ENCODE measurements at regions of chr3 and their contacts with region 1.

Region 1: GRCh38 chr3:15268033-15268631 is 62.1 kb downstream of the CAPN7 start:
- DNase-seq: peak; percentile 84
- CTCF ChIP-seq: peak; percentile 97

Region 2: DNA sequence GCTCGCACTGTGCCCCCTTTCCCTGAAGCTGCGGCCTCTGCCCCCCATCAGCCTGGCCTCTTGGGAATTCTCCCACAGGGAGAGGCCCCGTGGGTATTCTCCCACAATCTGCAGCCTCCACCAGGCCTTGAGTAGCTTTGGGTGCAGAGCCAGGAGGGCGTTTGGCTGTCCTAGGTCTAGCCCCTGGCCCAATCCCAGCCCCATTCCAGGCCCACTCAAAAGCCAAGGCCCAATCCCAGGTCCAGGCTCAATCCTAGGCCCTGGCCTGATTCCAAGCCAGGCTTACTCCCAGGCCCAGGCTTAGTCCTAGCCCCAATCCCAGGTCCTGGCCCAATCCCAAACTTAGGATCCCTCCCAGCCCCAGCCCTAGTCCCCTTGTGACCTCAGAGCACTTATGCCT is 1203.2 kb before region 1 on chr3:
- CTCF ChIA-PET with region 1: no interaction called
- POLR2A ChIA-PET with region 1: no interaction called
- DNase-seq: no peak
- CTCF ChIP-seq: no peak

Region 3: DNA sequence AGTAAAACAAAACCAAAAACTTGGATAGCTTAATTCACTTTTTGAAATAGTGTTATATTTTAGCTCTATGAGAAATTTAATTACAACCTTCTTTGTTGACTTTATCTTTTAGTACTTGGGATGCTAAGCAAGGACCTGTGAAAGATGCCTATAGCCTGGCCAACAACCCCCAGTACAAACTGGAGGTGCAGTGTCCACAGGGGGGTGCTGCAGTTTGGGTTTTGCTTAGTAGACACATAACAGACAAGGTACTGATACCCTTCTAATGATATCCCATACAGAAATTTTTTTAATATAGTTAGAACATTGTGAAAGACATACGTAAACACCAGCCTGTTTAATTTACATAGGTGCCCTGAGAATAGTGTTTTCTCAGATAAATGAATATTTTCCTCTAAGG is 26.8 kb before region 1 on chr3:
- CTCF ChIA-PET with region 1: interaction called, 22 read pairs
- POLR2A ChIA-PET with region 1: no interaction called
- DNase-seq: peak; percentile 33
- CTCF ChIP-seq: peak; percentile 37

Region 4: DNA sequence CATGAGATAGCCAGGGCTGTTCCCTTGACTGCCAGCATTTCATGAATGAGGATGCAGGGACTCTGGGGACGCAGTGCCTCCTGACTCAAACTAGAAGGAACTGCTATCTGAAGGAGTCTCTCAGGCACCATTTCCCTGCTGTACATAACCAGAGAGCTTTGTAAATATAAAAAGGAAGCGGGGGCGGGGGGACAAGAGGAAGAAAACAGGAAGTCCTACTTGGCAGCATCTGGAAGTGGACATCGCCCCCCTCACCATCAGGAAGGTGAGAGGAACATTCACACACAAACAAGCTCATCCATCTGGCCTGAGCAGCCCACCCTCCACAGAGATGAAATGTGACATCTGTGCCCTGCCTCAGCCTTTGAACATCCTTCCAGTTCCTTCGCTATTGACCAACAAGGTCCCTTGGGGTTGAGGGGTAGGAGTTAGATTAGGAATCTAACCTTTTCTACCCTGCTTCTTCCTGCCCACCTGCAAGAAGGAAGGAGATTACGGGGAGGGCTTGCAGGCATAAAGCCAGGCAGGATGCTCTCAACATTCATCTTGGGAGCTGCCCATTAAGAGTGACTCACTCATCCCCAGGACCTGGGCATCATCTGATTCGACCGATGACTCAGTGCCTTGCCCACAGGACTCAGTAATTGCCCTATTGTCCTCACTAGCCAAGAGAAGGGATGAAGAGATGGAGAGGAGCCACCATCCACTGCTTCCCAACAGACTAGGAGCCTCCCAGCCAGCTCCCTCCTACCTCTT is 32.4 kb after region 1 on chr3:
- CTCF ChIA-PET with region 1: interaction called, 16 read pairs
- POLR2A ChIA-PET with region 1: no interaction called
- DNase-seq: no peak
- CTCF ChIP-seq: no peak

Region 5: DNA sequence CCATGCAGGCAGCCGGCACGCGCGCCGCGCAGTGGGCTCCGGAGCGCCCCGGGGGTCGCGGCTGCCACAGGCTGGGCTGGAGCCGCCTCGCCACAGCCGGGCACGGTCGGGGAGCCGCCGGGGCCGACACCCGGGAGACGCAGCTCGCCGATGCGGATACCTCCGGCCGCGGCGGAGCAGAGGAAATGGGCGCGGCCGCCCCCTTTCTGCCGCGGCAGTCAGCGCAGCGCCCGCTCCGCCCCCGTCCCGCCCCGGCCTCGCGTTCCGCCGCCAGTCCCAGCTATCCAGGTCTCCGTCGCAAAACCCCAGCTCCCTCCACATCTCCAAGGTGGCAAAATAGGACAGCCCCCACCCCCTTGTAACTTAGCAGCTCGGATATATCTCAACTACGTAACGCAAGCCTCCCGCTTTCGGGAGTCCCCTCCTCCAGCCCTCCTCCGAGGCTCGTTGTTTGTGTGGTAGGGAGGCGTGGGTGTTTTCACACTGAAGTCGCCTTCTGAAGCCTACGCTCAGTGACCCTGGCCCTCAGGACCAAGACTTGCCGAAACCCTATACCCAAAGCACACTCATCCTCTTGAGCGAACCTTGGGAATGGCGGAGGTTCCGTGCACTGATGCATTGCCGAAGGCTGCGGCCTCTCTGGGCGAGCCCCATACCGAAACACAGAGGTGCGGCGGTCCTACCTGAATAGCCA is 64.4 kb after region 1 on chr3 and contains the start of gene SH3BP5:
- CTCF ChIA-PET with region 1: interaction called, 69 read pairs
- POLR2A ChIA-PET with region 1: no interaction called
- DNase-seq: peak; percentile 88
- CTCF ChIP-seq: peak; percentile 74

Region 6: DNA sequence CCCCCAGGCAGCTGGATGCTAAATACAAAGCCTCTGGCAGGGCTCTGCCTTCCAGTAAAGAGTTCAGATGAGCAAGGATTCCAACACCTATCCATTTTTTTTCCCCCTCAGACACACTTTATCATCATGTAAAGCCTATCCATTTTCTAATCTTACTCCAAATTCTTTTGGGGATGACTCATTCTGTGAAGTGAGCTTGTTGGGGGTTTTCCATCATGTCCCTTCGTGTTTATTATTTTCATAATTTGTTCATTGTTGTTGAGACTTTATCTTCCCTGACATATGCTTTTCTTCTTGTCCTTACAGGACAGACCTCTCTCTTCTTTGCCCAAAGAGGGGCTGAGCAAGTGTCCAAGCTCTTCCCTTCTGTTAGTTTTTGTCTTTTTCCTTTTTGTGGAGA is 98.9 kb after region 1 on chr3:
- CTCF ChIA-PET with region 1: interaction called, 28 read pairs
- POLR2A ChIA-PET with region 1: interaction called, 3 read pairs
- DNase-seq: no peak
- CTCF ChIP-seq: no peak

Region 7: GRCh38 chr3:15399970-15400369 is 131.8 kb after region 1 on chr3:
- CTCF ChIA-PET with region 1: interaction called, 151 read pairs
- POLR2A ChIA-PET with region 1: interaction called, 5 read pairs
- DNase-seq: no peak
- CTCF ChIP-seq: no peak

Region 8: GRCh38 chr3:15557511-15557946 is 289.4 kb after region 1 on chr3:
- CTCF ChIA-PET with region 1: interaction called, 14 read pairs
- POLR2A ChIA-PET with region 1: no interaction called
- DNase-seq: peak; percentile 35
- CTCF ChIP-seq: peak; percentile 38

Measured in GM10248 (cell line).